Activated B cell treated with CpG ODN at 0.5 μM for 24 hours (primary cell): ENCODE measurements at regions of chr3 and their contacts with region 1.

Region 1: DNA sequence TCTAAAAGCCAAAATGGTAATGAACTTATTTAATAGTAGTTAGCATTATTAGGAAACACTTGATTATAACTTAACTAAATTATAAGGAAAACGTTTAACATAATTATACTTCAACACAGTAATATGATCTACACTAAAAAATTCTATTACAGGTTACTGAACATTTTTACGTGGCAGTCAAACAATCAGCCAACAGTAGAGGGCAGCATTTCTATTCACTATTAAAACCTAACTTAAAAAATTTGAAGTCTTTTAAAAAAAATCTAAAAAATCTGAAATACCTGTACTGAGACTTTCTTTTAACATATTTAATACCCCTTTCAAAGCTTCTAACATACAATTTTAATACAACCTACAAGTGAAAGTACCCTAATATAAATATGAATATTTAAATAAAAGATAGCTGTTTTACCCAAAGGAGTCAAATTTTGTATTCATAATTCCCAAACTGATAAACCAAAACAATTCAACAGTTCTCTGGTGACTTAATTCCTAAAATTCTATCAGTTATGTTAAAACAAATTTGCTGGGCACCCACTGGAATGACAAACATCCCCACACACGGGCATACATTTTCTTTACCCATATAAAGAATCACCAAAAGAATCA is 41.5 kb downstream of the DLG1 start:
- DNase-seq: no peak
- ATAC-seq: no peak
- H3K4me3 Mint-ChIP-seq: no peak overlapping the region
- H3K27ac Mint-ChIP-seq: no peak overlapping the region
- H3K4me1 Mint-ChIP-seq: peaks cover 20% of the 10 kb centered on the region
- H3K27me3 Mint-ChIP-seq: no peaks in the 10 kb centered on the region
- CTCF ChIP-seq: no peak

Region 2: GRCh38 chr3:196537319-196537984 is 719.5 kb before region 1 on chr3:
- CTCF ChIA-PET with region 1: no interaction called
- POLR2A ChIA-PET with region 1: no interaction called
- intact Hi-C with region 1: no loop called
- DNase-seq: peak; percentile 25
- ATAC-seq: peak; percentile 34
- H3K4me3 Mint-ChIP-seq: no peak overlapping the region
- H3K27ac Mint-ChIP-seq: no peak overlapping the region
- H3K4me1 Mint-ChIP-seq: peaks cover 2% of the 10 kb centered on the region
- H3K27me3 Mint-ChIP-seq: no peaks in the 10 kb centered on the region
- CTCF ChIP-seq: peak; percentile 23

Region 3: GRCh38 chr3:196632046-196632751 is 624.7 kb before region 1 on chr3:
- CTCF ChIA-PET with region 1: no interaction called
- POLR2A ChIA-PET with region 1: no interaction called
- intact Hi-C with region 1: no loop called
- DNase-seq: peak; percentile 77
- ATAC-seq: peak; percentile 75
- H3K4me3 Mint-ChIP-seq: peak overlapping the region; percentile 93
- H3K27ac Mint-ChIP-seq: peak overlapping the region; percentile 96
- H3K4me1 Mint-ChIP-seq: peaks cover 66% of the 10 kb centered on the region
- H3K27me3 Mint-ChIP-seq: no peaks in the 10 kb centered on the region
- CTCF ChIP-seq: no peak

Region 4: GRCh38 chr3:197456261-197457091 is 199.5 kb after region 1 on chr3:
- CTCF ChIA-PET with region 1: interaction called, 14 read pairs
- POLR2A ChIA-PET with region 1: no interaction called
- intact Hi-C with region 1: loop called (anchors 5 kb)
- DNase-seq: peak; percentile 42
- ATAC-seq: peak; percentile 66
- H3K4me3 Mint-ChIP-seq: peak overlapping the region; percentile 88
- H3K27ac Mint-ChIP-seq: peak overlapping the region; percentile 83
- H3K4me1 Mint-ChIP-seq: peaks cover 14% of the 10 kb centered on the region
- H3K27me3 Mint-ChIP-seq: no peaks in the 10 kb centered on the region
- CTCF ChIP-seq: no peak

Region 5: DNA sequence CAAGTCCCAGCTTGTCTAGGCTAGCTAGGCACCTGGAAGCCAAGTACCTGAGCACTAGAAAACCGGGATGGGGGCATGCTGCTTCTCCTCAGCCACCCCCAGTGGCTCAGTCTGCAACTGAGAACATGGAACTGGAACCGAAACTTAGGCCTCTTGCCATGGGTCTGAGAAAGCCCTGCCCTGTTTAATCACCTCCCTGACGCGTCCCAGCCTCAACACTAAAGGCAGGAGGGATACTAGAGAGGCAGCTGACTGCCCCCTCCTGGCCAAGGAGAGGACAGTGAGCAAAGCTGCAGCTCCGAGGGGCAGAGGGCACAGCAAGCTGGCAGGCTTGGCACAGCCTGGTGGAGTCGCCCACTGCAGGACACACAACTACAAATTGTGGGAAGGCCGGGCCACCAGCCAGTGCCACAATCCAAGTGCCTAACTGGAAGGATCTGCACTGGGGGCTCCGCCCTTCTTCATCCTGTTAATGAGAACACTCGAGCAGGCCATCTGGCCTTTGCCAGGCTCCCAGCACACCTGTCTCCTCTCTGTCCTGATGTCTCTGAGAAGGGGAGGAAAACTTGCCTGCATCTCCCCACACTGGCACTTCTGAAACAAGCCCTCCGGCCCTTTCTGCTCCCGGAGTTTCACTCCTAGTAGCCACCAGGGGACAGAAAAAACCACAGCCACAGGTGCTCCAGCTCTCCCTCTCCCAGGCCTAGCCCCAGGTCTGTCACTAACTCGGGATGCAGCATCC is 245.1 kb after region 1 on chr3:
- CTCF ChIA-PET with region 1: interaction called, 48 read pairs
- POLR2A ChIA-PET with region 1: no interaction called
- intact Hi-C with region 1: no loop called
- DNase-seq: no peak
- ATAC-seq: peak; percentile 56
- H3K4me3 Mint-ChIP-seq: no peak overlapping the region
- H3K27ac Mint-ChIP-seq: no peak overlapping the region
- H3K4me1 Mint-ChIP-seq: no peaks in the 10 kb centered on the region
- H3K27me3 Mint-ChIP-seq: no peaks in the 10 kb centered on the region
- CTCF ChIP-seq: no peak

Region 6: DNA sequence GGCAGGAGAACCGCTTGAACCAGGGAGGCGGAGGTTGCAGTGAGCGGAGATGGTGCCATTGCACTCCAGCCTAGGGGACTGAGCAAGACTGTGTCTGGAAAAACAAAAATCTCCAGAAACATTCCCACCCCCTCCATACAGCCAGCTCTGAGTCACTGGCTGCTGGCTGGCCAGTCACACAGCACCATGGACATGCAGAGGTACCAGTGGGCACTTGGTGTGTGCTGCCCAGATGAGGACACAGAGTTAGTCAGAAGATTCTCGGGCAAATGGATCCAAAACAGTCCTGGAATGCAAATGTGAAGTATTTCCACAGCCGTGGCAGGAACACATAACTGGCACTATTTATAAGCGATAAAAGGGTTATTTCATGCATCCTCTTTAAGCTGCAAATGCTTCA is 254.2 kb after region 1 on chr3:
- CTCF ChIA-PET with region 1: interaction called, 48 read pairs
- POLR2A ChIA-PET with region 1: no interaction called
- intact Hi-C with region 1: loop called (anchors 1 kb)
- DNase-seq: no peak
- ATAC-seq: no peak
- H3K4me3 Mint-ChIP-seq: no peak overlapping the region
- H3K27ac Mint-ChIP-seq: no peak overlapping the region
- H3K4me1 Mint-ChIP-seq: peaks cover 4% of the 10 kb centered on the region
- H3K27me3 Mint-ChIP-seq: no peaks in the 10 kb centered on the region
- CTCF ChIP-seq: no peak

Region 7: DNA sequence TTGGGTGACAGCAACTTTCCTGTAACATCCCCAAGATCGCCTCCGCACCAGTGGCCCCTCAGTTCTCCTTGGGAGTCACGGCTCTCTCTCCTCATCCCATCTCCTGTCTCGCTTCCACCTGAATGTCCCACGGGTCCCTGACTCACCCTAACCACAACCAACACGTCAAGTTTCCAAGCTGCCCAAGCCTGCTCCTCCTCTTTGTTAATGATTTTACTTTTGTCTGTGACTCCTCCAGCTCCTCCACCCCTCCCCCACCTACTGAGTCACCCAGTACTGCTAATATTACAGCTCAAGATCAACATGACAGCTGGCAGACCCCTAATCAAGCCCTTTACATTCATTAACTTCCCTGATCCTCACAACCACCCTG is 259.6 kb after region 1 on chr3:
- CTCF ChIA-PET with region 1: interaction called, 48 read pairs
- POLR2A ChIA-PET with region 1: interaction called, 5 read pairs
- intact Hi-C with region 1: no loop called
- DNase-seq: no peak
- ATAC-seq: peak; percentile 60
- H3K4me3 Mint-ChIP-seq: no peak overlapping the region
- H3K27ac Mint-ChIP-seq: peak overlapping the region; percentile 83
- H3K4me1 Mint-ChIP-seq: peaks cover 13% of the 10 kb centered on the region
- H3K27me3 Mint-ChIP-seq: no peaks in the 10 kb centered on the region
- CTCF ChIP-seq: no peak